Cardiac septum (tissue), 1 donor: ENCODE measurements at regions of chr11 and their contacts with region 1.

Region 1: DNA sequence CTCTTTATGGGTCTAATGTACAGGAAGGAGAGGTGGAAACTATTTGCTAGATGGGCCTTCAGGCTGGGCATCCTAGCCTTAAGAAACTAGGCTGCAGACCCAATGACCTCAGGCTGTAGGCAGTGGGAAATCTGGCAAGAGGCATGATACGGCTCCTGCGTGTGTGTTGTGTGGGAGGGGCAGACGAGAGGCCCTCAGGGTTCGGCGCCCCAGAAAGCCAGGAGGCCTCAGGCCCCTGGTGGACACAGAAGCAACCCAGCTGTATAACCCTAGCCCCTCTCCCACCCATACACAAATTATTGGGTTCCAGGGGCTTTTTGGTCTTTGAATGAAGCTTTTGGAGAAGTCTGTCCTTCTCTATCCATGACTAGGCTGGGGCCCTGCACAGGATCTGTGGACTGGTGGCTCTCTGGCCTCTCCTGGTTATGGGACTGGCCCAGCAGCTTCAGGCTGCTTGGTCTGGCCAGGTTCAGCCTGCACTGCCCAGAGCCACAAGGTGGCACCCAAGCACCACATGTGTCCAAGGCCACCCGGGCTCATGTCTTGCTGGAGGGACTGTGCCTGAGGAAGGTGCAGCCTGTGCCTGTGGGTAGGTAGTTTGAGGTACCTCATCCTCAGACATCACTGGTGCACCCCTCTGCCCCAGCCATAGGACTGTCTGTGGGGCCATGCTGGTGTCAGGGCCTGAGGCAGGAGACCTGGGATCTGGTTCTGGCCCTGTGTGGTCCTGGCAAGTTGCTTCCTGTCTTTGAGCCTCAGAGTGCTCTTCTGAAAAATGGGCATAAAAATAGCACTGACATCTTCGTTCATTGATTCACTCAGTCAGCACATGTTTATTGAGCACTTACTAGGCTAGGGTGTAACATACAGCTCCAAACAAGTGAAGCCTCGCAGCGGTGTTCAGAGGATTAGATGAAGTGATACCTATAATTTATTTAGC is 87.5 kb downstream of the RRM1 start:
- DNase-seq: peak; percentile 80

Region 2: GRCh38 chr11:4146070-4146771 is 35.8 kb before region 1 on chr11:
- intact Hi-C with region 1: no loop called
- DNase-seq: no peak

Region 3: DNA sequence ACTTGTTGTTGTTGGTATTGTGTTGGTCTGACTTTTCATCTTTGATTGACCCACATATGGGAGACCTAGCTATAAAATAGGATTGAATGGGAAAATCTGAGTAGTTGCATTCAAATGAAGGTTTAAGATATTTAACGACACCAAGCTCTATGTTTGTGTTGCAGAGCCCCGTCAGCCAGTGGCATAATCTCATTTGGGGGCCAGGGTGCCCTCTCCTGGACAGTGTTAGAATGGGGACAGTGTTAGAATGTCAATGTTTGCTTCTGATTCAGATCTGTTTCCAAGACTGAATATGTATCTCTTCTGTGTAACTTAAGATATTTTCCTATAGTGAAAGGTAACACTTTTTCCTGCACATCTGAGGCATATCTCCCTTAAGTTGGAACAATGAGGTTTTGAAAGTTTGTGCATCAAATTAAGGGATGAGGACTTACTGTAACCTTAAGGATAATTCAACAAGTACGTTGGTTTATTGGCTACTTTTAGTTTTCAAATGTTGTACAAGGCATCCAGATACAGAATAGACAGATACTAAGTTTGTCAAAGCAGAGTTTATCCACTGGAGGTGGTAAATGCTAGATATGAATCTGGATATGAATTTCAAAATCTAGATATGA is 357.7 kb after region 1 on chr11:
- intact Hi-C with region 1: loop called (anchors 5 kb)
- DNase-seq: peak; percentile 79